Posterior cingulate gyrus (tissue), 11 donors: ENCODE measurements at regions of chr15 and their contacts with region 1.

Region 1: GRCh38 chr15:26461847-26462608 is 310.8 kb downstream of the GABRB3 start:
- DNase-seq: no peak

Region 2: GRCh38 chr15:26421065-26421464 is 41.0 kb before region 1 on chr15:
- intact Hi-C with region 1: loop called (anchors 5 kb)
- DNase-seq: no peak